ENCODE measurements at regions of chr2 and their contacts with region 1.

Region 1: GRCh38 chr2:62415019-62415431 is 91.0 kb downstream of the TMEM17 start:
- DNase-seq: peak; percentile 60
- CTCF ChIP-seq: no peak

Region 2: GRCh38 chr2:61910603-61911002 is 504.4 kb before region 1 on chr2:
- in situ Hi-C with region 1: loop called (anchors 5 kb)
- DNase-seq: no peak
- CTCF ChIP-seq: no peak

Region 3: DNA sequence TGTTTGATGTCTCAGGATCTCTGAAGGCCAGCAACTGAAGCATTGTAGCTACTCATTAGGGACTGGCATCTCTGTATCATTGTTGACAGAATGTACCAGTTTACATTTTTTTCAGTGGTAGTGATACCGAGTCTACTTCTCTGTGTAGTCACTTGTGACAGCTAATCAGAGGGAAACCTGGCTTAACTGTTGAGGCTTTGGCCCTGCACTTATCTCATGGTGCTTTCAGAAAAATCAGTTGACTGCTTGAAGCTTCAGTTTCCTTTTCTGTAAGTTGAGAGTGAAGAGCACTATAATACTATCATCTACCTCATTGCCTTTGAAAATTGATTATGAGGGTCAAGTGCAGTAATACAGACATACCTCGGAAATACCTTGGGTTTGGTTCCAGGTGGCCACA is 419.5 kb before region 1 on chr2:
- in situ Hi-C with region 1: loop called (anchors 5 kb)
- DNase-seq: peak; percentile 63
- CTCF ChIP-seq: no peak

Region 4: DNA sequence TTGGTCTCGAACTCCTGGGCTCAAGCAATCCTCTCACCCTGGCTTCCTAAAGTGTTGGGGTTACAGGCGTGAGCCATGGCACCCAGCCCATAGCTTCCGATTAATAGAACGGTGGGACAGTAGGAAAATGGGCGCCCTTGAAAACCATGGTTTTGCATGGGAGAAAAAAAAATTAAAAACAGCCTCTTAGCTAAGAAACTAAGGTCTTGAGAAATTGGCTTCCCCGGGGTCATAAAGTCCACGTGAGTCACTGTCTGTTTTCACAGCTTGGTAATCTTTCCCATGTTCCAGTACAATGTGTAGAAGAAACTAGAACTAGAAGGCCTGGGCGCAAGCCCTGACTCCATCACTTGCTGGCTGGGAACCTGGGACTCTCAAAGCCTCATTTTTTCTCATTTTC is 198.4 kb before region 1 on chr2:
- in situ Hi-C with region 1: loop called (anchors 10 kb)
- DNase-seq: no peak
- CTCF ChIP-seq: no peak

Region 5: GRCh38 chr2:62627667-62628066 is 212.6 kb after region 1 on chr2:
- in situ Hi-C with region 1: no loop called
- DNase-seq: no peak
- CTCF ChIP-seq: no peak